ENCODE measurements at regions of chr19 and their contacts with region 1.

Region 1: GRCh38 chr19:12881172-12881808 is at the start of gene DNASE2:
- DNase-seq: peak; percentile 70 to 93 (median 83)
- ATAC-seq: peak; percentile 67 to 75
- H3K4me3 Mint-ChIP-seq: peak within 1 kb of the TSS; percentile 83 to 91 (median 89)
- H3K27ac Mint-ChIP-seq: peak within 1 kb of the TSS; percentile 82 to 93 (median 90)
- H3K4me1 Mint-ChIP-seq: peaks cover 9 to 31% (median 28%) of the 10 kb centered on the region in 4 donors
- H3K27me3 Mint-ChIP-seq: no peaks in the 10 kb centered on the region
- polyA plus RNA-seq, gene DNASE2: 46.1 to 49.5 (median 46.2) TPM

Region 2: GRCh38 chr19:12806239-12807081 is 74.8 kb before region 1 on chr19 and contains the start of gene RNASEH2A:
- POLR2A ChIA-PET with region 1: no interaction called
- DNase-seq: peak; percentile 76 to 88 (median 83)
- ATAC-seq: peak; percentile 89 to 90
- H3K4me3 Mint-ChIP-seq: peak within 1 kb of the TSS; percentile 85 to 97 (median 93)
- H3K27ac Mint-ChIP-seq: peak within 1 kb of the TSS; percentile 80 to 95 (median 90)
- H3K4me1 Mint-ChIP-seq: peaks cover 13 to 22% (median 21%) of the 10 kb centered on the region in 4 donors
- H3K27me3 Mint-ChIP-seq: no peaks in the 10 kb centered on the region
- polyA plus RNA-seq, gene RNASEH2A: 16.3 to 22.6 (median 21.9) TPM

Region 3: DNA sequence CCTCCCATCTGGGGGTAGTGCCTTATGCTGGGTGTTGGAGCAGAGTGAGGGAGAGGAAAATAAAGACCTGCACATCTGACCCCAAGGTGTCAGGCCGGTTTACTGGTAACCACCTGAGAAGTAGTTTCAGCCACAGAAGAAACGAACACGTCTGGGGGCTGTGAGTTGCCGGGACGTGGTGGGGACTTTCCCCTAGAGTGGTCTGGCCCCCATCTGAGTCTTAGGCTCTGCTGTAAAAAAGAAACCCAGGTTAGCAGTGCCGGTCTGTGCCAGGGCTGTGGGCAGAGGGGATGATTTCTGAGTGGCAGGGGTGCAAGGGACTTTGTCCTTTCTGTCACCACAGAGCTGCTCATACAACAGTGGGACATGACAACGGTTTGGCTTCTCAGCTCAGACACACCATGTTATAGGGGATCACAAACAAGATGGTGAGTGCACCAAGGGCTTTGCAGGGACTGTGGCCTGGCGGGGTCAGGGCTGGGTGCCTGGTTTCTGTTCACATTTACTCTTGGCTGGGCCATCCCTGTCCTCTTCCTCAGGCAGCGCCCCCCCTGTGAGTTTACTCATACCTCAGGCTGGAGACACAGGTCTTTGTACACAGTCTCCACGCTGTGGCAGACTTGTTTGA is 18.7 kb after region 1 on chr19:
- POLR2A ChIA-PET with region 1: interaction called, 11 read pairs
- DNase-seq: no peak
- ATAC-seq: peak in 1 of 2 donors; percentile 23
- H3K4me3 Mint-ChIP-seq: no peak overlapping the region
- H3K27ac Mint-ChIP-seq: peak overlapping the region in 2 of 10 donors; percentile 7 to 73
- H3K4me1 Mint-ChIP-seq: peaks cover 0 to under 1% (median under 1%) of the 10 kb centered on the region in 4 donors
- H3K27me3 Mint-ChIP-seq: no peaks in the 10 kb centered on the region

Region 4: GRCh38 chr19:12913011-12913561 is 31.8 kb after region 1 on chr19:
- POLR2A ChIA-PET with region 1: interaction called, 13 read pairs
- DNase-seq: no peak
- ATAC-seq: no peak
- H3K4me3 Mint-ChIP-seq: peak overlapping the region in 4 of 10 donors; percentile 10 to 82 (median 52)
- H3K27ac Mint-ChIP-seq: peak overlapping the region; percentile 93 to 99 (median 98)
- H3K4me1 Mint-ChIP-seq: peaks cover 13 to 37% (median 17%) of the 10 kb centered on the region in 4 donors
- H3K27me3 Mint-ChIP-seq: no peaks in the 10 kb centered on the region

Region 5: GRCh38 chr19:12938234-12939025 is 57.1 kb after region 1 on chr19 and contains the start of gene CALR:
- POLR2A ChIA-PET with region 1: interaction called, 56 read pairs
- DNase-seq: peak; percentile 95 to 100 (median 100)
- ATAC-seq: peak; percentile 88 to 91
- H3K4me3 Mint-ChIP-seq: peak within 1 kb of the TSS; percentile 97 to 100 (median 98)
- H3K27ac Mint-ChIP-seq: peak within 1 kb of the TSS; percentile 94 to 99 (median 96)
- H3K4me1 Mint-ChIP-seq: peaks cover 25 to 70% (median 61%) of the 10 kb centered on the region in 4 donors
- H3K27me3 Mint-ChIP-seq: no peaks in the 10 kb centered on the region
- polyA plus RNA-seq, gene CALR: 135 to 190 (median 165) TPM

Region 6: GRCh38 chr19:12956446-12957388 is 75.4 kb after region 1 on chr19 and contains the start of gene GADD45GIP1:
- POLR2A ChIA-PET with region 1: interaction called, 10 read pairs
- DNase-seq: peak; percentile 68 to 87 (median 78)
- ATAC-seq: peak; percentile 93 to 98
- H3K4me3 Mint-ChIP-seq: peak within 1 kb of the TSS; percentile 75 to 93 (median 86)
- H3K27ac Mint-ChIP-seq: peak within 1 kb of the TSS; percentile 61 to 95 (median 91)
- H3K4me1 Mint-ChIP-seq: peaks cover 15 to 29% (median 25%) of the 10 kb centered on the region in 4 donors
- H3K27me3 Mint-ChIP-seq: no peaks in the 10 kb centered on the region
- polyA plus RNA-seq, gene GADD45GIP1: 59.4 to 65.1 (median 64.7) TPM

Region 7: GRCh38 chr19:12965017-12965811 is 83.9 kb after region 1 on chr19:
- POLR2A ChIA-PET with region 1: interaction called, 13 read pairs
- DNase-seq: peak; percentile 63 to 85 (median 79)
- ATAC-seq: peak; percentile 95 to 97
- H3K4me3 Mint-ChIP-seq: peak overlapping the region; percentile 81 to 98 (median 90)
- H3K27ac Mint-ChIP-seq: peak overlapping the region in 9 of 10 donors; percentile 31 to 92 (median 79)
- H3K4me1 Mint-ChIP-seq: peaks cover 5 to 12% (median 6%) of the 10 kb centered on the region in 4 donors
- H3K27me3 Mint-ChIP-seq: peaks cover 0 to 2% (median 0%) of the 10 kb centered on the region in 5 donors

Region 8: GRCh38 chr19:13228561-13228960 is 347.3 kb after region 1 on chr19:
- POLR2A ChIA-PET with region 1: no interaction called
- DNase-seq: no peak
- ATAC-seq: no peak
- H3K4me3 Mint-ChIP-seq: no peak overlapping the region
- H3K27ac Mint-ChIP-seq: peak overlapping the region in 2 of 10 donors; percentile 29 to 35
- H3K4me1 Mint-ChIP-seq: peaks cover 0 to 6% (median 3%) of the 10 kb centered on the region in 4 donors
- H3K27me3 Mint-ChIP-seq: peaks cover 0 to 14% (median 5%) of the 10 kb centered on the region in 5 donors